Activated CD8-positive, alpha-beta memory T cell treated with anti-CD3 and anti-CD28 coated beads, Interleukin-2, amount 10 ng/mL, durations not matched to agents 7 days and 5 days (primary cell): ENCODE measurements at regions of chr19 and their contacts with region 1.

Region 1: GRCh38 chr19:12610540-12611360 is at the starts of genes ZNF490 and ZNF791:
- DNase-seq: peak; percentile 99
- ATAC-seq: peak; percentile 90
- H3K4me3 Mint-ChIP-seq: peak within 1 kb of the TSS; percentile 94
- H3K27ac Mint-ChIP-seq: peak within 1 kb of the TSS; percentile 100
- H3K4me1 Mint-ChIP-seq: peaks cover 41% of the 10 kb centered on the region
- H3K27me3 Mint-ChIP-seq: no peaks in the 10 kb centered on the region
- total RNA-seq, gene ZNF490: 14.0 to 14.7 TPM
- total RNA-seq, gene ZNF791: 30.0 to 41.5 TPM

Region 2: DNA sequence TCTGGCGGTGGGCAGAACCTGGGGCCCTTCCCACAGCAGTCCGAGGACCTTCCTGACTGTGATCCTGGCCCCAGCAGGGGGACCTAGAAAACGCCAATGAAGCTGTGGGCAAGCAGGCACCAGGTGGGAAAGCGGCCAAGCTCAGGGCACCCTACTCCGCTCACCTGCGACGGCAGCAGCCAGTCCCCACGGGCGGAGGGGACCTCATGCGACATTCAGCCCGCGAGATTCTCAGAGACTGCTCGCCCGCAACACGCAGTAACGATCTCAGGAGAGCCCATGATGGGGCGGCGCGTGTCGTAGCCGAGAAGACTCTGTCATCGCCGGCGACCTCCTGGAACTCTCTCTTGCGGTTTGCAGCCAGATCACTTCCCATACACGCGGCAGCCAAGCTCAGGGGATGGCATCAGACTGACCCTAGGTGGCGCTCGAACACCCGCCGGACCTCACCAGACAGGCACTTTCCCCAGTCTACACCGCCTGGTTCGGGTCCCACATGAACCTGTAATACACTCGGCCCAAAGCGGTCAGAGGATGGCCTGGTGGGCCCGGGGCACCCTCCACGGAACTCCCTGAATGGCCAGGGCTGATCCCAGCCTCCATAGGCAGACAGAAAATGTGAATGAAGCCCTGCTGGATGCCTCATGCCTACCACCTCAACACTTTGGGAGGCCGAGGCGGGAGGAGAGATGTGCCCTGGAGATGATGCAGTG is 29.3 kb after region 1 on chr19:
- CTCF ChIA-PET with region 1: interaction called, 15 read pairs
- DNase-seq: peak; percentile 93
- ATAC-seq: peak; percentile 96
- H3K4me3 Mint-ChIP-seq: peak overlapping the region; percentile 53
- H3K27ac Mint-ChIP-seq: peak overlapping the region; percentile 58
- H3K4me1 Mint-ChIP-seq: peaks cover 9% of the 10 kb centered on the region
- H3K27me3 Mint-ChIP-seq: no peaks in the 10 kb centered on the region

Region 3: DNA sequence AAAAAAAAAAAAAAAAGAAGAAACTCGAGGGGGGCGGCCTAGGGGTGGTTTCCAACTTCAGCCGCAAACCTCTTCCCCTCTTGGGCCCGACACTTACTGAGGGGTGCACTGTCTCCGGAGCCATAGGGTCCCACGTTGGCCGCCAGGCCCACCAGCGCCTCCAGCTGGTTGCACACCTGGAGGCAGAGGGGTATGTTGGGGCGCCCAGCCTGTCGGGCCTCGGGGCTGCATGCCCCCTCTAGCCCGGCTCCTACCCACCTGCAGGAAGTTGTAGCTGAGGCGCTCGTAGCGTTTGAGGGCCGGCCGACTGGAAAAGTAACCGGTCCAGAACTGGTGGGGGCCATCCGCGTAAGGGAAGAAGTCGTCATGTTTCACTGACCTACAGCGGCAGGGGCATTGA is 47.2 kb after region 1 on chr19:
- CTCF ChIA-PET with region 1: no interaction called
- DNase-seq: no peak
- ATAC-seq: no peak
- H3K4me3 Mint-ChIP-seq: no peak overlapping the region
- H3K27ac Mint-ChIP-seq: no peak overlapping the region
- H3K4me1 Mint-ChIP-seq: no peaks in the 10 kb centered on the region
- H3K27me3 Mint-ChIP-seq: no peaks in the 10 kb centered on the region